ENCODE measurements at regions of chr2 and their contacts with region 1.

Region 1: GRCh38 chr2:162333968-162334367 is 10.0 kb upstream of the GCA start:
- DNase-seq: peak in 4 of 9 experiments; percentile 15 to 54 (median 37)
- ATAC-seq: peak; percentile 44
- H3K4me3 ChIP-seq: no peak overlapping the region
- H3K4me3 Mint-ChIP-seq: no peak overlapping the region
- H3K27ac ChIP-seq: no peak overlapping the region
- H3K27ac Mint-ChIP-seq: no peak overlapping the region
- H3K4me1 ChIP-seq: no peaks in the 10 kb centered on the region
- H3K4me1 Mint-ChIP-seq: no peaks in the 10 kb centered on the region
- H3K27me3 ChIP-seq: no peaks in the 10 kb centered on the region
- H3K27me3 Mint-ChIP-seq: no peaks in the 10 kb centered on the region
- CTCF ChIP-seq: peak; percentile 17

Region 2: DNA sequence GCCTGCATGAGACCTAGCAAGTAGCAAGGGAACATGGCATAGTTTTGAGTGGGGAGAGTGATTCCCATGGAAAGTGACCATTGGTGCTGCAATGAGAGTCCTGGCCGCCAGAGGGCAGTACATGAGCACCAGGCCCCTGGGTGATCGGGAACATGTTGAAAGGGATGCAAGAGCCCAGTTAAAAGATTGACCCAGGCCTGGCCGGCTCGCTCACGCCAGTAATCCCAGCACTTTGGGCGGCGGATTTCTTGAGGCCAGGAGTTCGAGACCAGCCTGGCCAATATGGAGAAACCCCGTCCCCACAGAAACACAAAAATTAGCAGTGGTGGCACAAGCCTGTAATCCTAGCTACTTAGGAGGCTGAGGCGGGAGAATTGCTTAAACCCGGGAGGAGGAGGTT is 112.9 kb before region 1 on chr2:
- CTCF ChIA-PET with region 1: interaction called, 22 read pairs
- POLR2A ChIA-PET with region 1: no interaction called
- intact Hi-C with region 1: loop called in 1 of 2 experiments (anchors 1 kb)
- DNase-seq: peak in 8 of 9 experiments; percentile 30 to 72 (median 56)
- ATAC-seq: peak; percentile 62
- H3K4me3 ChIP-seq: no peak overlapping the region
- H3K4me3 Mint-ChIP-seq: no peak overlapping the region
- H3K27ac ChIP-seq: no peak overlapping the region
- H3K27ac Mint-ChIP-seq: no peak overlapping the region
- H3K4me1 ChIP-seq: no peaks in the 10 kb centered on the region
- H3K4me1 Mint-ChIP-seq: no peaks in the 10 kb centered on the region
- H3K27me3 ChIP-seq: peaks cover 0 to 6% of the 10 kb centered on the region in 2 experiments
- H3K27me3 Mint-ChIP-seq: peaks cover 18% of the 10 kb centered on the region
- CTCF ChIP-seq: peak; percentile 81

Region 3: DNA sequence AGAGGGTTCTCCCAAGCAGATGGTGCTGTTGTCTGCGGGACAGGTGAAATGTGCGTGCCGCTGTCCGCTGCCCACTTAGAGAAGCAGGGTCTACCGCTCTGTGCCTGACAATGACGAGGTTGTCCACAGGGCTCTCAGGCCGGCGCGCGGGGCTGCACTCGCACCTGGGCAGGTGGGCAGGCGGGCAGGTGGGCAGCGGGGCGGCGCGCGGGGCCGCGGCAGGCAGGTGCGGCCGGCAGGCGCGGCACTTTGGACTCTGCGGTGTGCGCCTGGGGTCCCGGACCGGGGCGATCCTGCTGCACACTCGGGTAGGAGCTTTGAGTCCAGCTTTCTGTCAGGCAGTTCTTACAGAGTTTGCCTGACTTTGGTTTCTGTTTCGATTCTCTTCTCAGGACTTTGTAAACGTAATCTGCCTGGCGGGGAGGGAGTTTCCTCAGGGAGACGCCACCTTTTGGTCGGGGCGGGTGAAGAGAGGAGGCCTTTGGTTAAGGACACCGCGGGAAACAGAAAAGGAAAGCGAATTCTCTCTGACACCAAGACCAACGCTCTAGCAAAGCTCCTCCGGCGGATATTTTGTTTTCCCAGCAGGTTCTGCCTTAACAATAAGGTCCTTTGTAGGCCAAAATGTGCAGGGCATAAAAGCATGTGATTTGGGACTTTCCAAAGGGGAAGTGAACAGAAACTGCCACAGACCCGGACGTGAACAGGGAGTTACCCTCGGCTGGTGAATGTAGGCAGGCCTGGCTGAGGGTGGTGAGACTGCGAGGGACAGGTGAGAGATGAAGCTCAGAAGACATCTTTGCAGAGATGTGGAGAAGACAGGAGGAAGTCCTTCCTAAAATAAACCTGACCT is 15.4 kb before region 1 on chr2 and contains the start of gene IFIH1:
- CTCF ChIA-PET with region 1: interaction called, 13 read pairs
- POLR2A ChIA-PET with region 1: interaction called, 7 read pairs
- intact Hi-C with region 1: loop called in 1 of 2 experiments (anchors 2 kb)
- DNase-seq: peak; percentile 40 to 94 (median 68)
- ATAC-seq: peak; percentile 82
- H3K4me3 ChIP-seq: peak within 1 kb of the TSS; percentile 64 to 76
- H3K4me3 Mint-ChIP-seq: peak within 1 kb of the TSS; percentile 97
- H3K27ac ChIP-seq: peak within 1 kb of the TSS; percentile 92 to 95
- H3K27ac Mint-ChIP-seq: peak within 1 kb of the TSS; percentile 99
- H3K4me1 ChIP-seq: peaks cover 45% of the 10 kb centered on the region
- H3K4me1 Mint-ChIP-seq: peaks cover 65% of the 10 kb centered on the region
- H3K27me3 ChIP-seq: no peaks in the 10 kb centered on the region
- H3K27me3 Mint-ChIP-seq: no peaks in the 10 kb centered on the region
- CTCF ChIP-seq: no peak
- total RNA-seq, gene IFIH1: 30.8 to 32.5 TPM

Measured in CD8-positive, alpha-beta T cell (primary cell).